ENCODE measurements at regions of chr5 and their contacts with region 1.

Region 1: DNA sequence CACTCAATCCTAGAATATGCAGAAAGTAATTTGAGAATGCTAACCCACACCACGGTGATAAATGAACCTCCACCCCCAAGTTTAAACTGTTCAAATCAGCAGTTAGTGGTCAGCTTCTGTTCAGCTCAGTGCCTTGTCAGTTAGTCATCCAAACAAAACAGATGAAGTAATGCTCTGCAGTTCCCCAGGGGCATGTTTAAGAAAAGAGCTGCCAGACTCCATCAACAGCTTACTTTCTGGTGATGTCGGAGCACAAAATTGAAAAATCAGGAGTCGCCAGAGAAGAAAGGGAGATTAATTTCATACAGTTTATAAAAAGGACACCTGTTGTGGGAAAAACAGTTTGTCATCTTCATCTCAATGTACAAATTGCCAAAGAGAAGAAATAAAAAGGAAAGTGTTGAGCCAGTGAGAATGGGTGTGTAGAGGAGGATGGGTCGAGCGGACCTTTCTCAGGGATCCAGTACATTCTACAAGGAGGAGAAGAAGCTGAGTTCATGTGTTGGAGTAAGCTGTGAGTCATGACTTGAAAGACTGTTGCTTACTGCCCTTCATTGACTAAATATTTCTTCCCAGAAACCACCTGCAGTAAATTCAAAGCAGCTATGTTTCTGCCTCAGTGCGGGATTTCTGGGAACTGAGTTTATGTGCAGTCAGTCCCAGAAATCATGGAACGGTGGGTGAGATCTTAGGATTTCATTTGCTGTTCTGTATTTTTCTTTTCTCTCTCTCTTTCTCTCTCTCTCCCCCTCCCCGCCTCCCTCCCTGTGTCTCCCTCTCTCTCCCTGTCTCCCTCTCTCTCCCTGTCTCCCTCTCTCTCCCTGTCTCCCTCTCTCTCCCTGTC is 13.7 kb downstream of the TRIO start:
- DNase-seq: peak; percentile 67
- ATAC-seq: peak; percentile 75
- H3K4me3 ChIP-seq: peak overlapping the region; percentile 20
- H3K27ac ChIP-seq: peak overlapping the region; percentile 92
- H3K4me1 ChIP-seq: peaks cover 60% of the 10 kb centered on the region
- H3K27me3 ChIP-seq: no peaks in the 10 kb centered on the region
- CTCF ChIP-seq: no peak
- EP300 ChIP-seq: peak in 1 of 2 experiments; percentile 61; a peak in 2 of 4 replicates
- POLR2A ChIP-seq: peak; percentile 39; the same call in 1 of the 2 replicates
- RAD21 ChIP-seq: peak; percentile 8; the same call in 1 of the 2 replicates

Region 2: GRCh38 chr5:14011089-14012004 is 145.5 kb before region 1 on chr5:
- CTCF ChIA-PET with region 1: no interaction called
- POLR2A ChIA-PET with region 1: no interaction called
- RAD21 ChIA-PET with region 1: no interaction called
- SMC1A ChIA-PET with region 1: no interaction called
- in situ Hi-C with region 1: no loop called
- intact Hi-C with region 1: no loop called
- DNase-seq: no peak
- ATAC-seq: peak; percentile 97
- H3K4me3 ChIP-seq: peak overlapping the region; percentile 70
- H3K27ac ChIP-seq: no peak overlapping the region
- H3K4me1 ChIP-seq: peaks cover 8% of the 10 kb centered on the region; the same call in 1 of the 2 replicates
- H3K27me3 ChIP-seq: no peaks in the 10 kb centered on the region
- CTCF ChIP-seq: no peak
- EP300 ChIP-seq: no peak
- POLR2A ChIP-seq: 0 out of 2 replicates have a peak, but pooled peaks have one; percentile 30
- RAD21 ChIP-seq: no peak

Region 3: DNA sequence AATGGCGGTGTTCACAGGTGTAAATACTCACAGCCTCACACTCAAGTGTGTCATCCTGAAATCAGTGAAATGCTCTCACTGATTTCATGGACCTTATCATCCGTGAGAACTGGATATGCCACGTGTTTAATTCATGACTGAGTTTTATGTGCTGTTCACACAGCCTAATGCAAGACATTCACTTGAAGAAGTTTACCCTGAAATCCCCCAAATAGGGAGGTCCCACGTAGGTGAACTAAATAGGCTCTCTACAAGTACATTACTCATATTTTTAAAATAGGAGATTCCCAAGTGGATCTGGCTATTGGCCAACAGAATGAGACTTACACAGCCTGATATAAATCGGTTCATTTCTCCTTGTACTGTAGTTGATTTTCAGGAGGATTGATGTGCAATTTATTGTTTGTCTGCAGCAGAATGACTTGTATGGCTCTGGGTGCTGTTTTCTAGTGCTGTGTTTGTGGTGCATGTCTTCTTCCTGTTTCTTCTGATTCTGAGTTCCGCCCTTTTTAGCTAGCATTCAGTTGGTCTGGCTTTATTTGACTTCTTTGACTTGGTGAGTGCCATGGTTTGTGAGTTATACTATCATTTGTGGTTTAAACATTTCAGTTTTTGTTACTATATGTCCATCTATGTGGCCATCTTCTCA is 11.4 kb after region 1 on chr5:
- CTCF ChIA-PET with region 1: interaction called, 43 read pairs
- POLR2A ChIA-PET with region 1: interaction called, 314 read pairs
- RAD21 ChIA-PET with region 1: interaction called, 344 read pairs
- SMC1A ChIA-PET with region 1: interaction called, 430 read pairs
- in situ Hi-C with region 1: no loop called
- intact Hi-C with region 1: loop called (anchors 2 kb)
- DNase-seq: no peak
- ATAC-seq: peak; percentile 63
- H3K4me3 ChIP-seq: peak overlapping the region; percentile 50
- H3K27ac ChIP-seq: peak overlapping the region; percentile 91
- H3K4me1 ChIP-seq: peaks cover 41% of the 10 kb centered on the region
- H3K27me3 ChIP-seq: no peaks in the 10 kb centered on the region
- CTCF ChIP-seq: no peak
- EP300 ChIP-seq: no peak
- POLR2A ChIP-seq: peak; percentile 14; the same call in 1 of the 2 replicates
- RAD21 ChIP-seq: no peak

Region 4: DNA sequence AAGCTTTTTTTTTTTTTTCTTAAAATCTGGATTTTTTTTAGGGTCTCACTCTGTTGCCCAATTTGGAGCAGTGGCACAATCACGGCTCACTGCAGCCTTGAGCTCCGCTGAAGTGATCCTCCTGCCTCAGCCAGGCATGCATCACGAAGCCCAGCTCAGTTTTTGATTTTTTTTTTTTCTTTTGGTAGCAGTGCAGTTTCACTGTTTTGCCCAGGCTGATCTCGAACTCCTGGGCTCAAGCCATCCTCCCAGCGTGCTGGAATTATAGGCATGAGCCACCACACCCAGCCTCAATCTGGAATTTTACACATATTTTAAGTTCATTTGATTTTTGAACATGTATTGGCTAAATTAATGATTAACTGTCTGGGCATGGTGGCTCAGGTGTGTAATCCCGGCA is 22.6 kb after region 1 on chr5:
- CTCF ChIA-PET with region 1: interaction called, 8 read pairs
- POLR2A ChIA-PET with region 1: interaction called, 314 read pairs
- RAD21 ChIA-PET with region 1: interaction called, 344 read pairs
- SMC1A ChIA-PET with region 1: interaction called, 430 read pairs
- in situ Hi-C with region 1: no loop called
- intact Hi-C with region 1: no loop called
- DNase-seq: no peak
- ATAC-seq: no peak
- H3K4me3 ChIP-seq: no peak overlapping the region
- H3K27ac ChIP-seq: no peak overlapping the region
- H3K4me1 ChIP-seq: peaks cover 33% of the 10 kb centered on the region
- H3K27me3 ChIP-seq: no peaks in the 10 kb centered on the region
- CTCF ChIP-seq: no peak
- EP300 ChIP-seq: no peak
- POLR2A ChIP-seq: no peak
- RAD21 ChIP-seq: no peak

Region 5: DNA sequence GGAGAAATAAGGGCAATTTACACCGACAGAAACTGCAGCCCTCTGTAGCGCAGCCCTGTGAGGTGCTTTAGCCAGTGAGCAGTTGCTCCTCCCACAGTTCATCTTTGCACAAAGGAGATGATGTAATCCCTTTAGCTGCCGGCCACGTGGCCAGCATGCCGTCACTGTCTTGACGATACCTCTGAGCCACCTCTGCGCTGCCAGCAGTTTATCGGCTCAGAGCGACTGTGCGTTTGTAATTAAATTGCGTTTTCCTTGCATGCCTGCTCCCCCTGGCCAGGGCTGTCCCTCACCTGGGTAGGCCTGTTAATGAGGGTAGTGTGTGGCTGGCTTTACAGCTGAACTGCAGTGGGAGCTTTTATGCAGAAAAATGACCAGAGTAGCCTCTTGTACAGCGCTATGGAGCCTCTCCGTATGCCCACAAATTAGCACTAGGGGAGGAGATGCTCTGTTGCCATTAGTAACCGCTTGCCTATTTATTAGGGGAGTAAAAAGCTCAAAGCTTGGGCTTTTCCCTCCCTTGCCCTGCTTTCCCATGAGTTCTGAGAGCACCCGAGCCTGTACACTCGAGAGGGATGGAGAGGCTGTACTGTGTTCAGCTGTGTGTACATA is 93.3 kb after region 1 on chr5:
- CTCF ChIA-PET with region 1: no interaction called
- POLR2A ChIA-PET with region 1: interaction called, 3 read pairs
- RAD21 ChIA-PET with region 1: interaction called, 3 read pairs
- SMC1A ChIA-PET with region 1: interaction called, 15 read pairs
- in situ Hi-C with region 1: no loop called
- intact Hi-C with region 1: no loop called
- DNase-seq: no peak
- ATAC-seq: peak; percentile 20
- H3K4me3 ChIP-seq: peak overlapping the region; percentile 34; the same call in 1 of the 2 replicates
- H3K27ac ChIP-seq: peak overlapping the region; percentile 79
- H3K4me1 ChIP-seq: peaks cover 44% of the 10 kb centered on the region
- H3K27me3 ChIP-seq: no peaks in the 10 kb centered on the region
- CTCF ChIP-seq: no peak
- EP300 ChIP-seq: no peak
- POLR2A ChIP-seq: no peak
- RAD21 ChIP-seq: no peak

Region 6: DNA sequence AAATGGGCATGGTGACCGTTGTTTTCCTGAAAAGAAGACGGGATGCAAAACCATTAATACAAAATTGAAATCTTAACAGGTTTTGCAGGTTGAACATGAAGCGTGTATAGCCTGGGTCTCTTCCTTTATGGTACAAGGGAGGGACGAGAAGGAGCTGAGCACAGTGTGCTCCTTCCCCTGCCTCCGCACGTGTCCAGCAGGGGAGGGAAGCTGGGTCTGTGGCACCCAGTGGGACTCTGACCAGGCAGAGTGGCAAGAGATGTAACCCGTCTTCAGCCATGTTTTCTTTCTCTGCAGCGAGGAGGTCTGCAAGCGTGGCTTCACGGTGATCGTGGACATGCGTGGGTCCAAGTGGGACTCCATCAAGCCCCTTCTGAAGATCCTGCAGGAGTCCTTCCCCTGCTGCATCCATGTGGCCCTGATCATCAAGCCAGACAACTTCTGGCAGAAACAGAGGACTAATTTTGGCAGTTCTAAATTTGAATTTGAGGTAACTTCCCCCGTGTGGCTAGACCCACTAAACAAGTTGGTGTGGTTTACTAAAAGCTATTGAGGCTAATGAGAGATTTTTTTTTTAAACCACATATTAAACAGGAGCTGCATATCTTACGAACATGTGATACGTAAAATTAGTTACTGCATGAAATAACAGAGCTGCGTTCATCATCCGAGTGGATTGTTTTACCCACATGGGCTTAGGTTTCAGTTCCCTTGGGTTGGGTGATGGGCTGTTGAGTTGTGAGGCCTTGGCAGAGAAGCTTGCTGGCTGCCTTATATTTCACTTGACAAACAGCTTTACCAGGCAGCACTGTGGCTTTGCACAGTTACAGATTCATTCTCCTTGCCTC is 129.9 kb after region 1 on chr5:
- CTCF ChIA-PET with region 1: no interaction called
- POLR2A ChIA-PET with region 1: interaction called, 3 read pairs
- RAD21 ChIA-PET with region 1: interaction called, 15 read pairs
- SMC1A ChIA-PET with region 1: interaction called, 7 read pairs
- in situ Hi-C with region 1: no loop called
- intact Hi-C with region 1: no loop called
- DNase-seq: peak; percentile 86
- ATAC-seq: peak; percentile 95
- H3K4me3 ChIP-seq: no peak overlapping the region
- H3K27ac ChIP-seq: peak overlapping the region; percentile 53
- H3K4me1 ChIP-seq: peaks cover 17% of the 10 kb centered on the region
- H3K27me3 ChIP-seq: no peaks in the 10 kb centered on the region
- CTCF ChIP-seq: no peak
- EP300 ChIP-seq: peak; percentile 79 to 90
- POLR2A ChIP-seq: no peak
- RAD21 ChIP-seq: no peak